ENCODE measurements at regions of chr4 and their contacts with region 1.

Region 1: DNA sequence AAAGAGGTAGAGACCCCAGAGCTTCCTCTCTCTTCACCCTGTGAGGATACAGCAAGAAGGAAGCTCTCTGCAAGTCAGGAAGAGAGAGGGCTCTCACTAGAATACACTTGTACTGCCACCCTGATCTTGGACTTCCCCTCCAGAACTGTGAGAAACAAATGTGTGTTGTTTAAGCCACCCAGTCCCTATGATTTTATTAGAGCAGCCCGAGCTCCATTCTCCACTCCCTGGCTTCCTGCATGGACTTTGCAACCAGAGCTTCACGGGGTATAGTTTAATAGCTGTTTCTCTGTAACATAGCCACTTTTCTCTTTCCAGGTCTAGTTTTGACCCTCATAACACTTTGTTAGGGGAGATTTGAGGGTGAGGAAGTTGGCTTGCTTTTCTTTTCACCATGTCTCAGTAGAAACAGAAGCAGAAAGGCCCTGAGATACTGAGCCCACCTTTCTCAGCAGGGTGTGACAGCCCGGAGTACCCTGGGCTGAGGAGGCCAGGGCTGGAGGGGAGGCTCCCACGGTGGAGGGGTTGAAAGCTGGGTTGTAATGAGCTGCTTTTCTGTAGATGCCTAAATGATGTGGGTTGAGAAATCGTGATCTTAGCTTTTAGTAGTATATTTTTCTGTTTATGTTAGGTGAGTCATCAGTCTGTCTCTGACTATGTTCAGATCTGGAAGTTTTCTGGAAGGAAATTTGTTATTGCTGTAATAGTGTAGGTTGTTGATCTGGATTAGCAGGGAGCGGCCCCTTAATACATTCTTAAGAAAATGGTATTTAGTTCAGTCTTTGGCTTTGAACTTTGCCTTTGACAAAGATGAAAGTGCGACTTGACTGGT is 118.6 kb downstream of the PTTG2 start:
- DNase-seq: no peak
- ATAC-seq: no peak
- H3K4me3 ChIP-seq: peak overlapping the region in 1 of 12 donors; percentile 5
- H3K27ac ChIP-seq: peak overlapping the region in 11 of 12 donors; percentile 33 to 92 (median 64)
- H3K4me1 ChIP-seq: peaks cover 2 to 95% (median 55%) of the 10 kb centered on the region in 12 donors
- H3K27me3 ChIP-seq: no peaks in the 10 kb centered on the region
- CTCF ChIP-seq: no peak
- POLR2A ChIP-seq: no peak

Region 2: DNA sequence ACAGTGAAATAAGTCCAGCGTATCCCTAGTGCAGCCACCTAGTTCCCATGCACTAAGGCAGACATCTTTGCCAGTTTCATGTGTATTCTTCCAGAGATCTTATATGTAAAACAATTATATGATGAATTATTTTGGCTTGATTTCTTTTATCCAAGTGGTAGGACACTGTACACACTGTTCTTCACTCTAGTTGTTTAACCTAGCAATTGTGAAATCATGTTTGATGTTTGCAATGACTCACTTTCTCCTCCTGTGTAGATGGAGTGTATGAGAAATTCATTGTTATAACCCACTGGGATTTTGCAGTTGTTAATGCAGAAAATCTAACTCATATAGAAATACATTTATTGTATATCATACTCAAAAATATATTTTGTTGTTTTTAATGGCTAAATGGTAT is 205.4 kb before region 1 on chr4:
- intact Hi-C with region 1: no loop called
- DNase-seq: no peak
- ATAC-seq: peak in 2 of 4 donors; percentile 70 to 89
- H3K4me3 ChIP-seq: no peak overlapping the region
- H3K27ac ChIP-seq: peak overlapping the region in 1 of 12 donors; percentile 82
- H3K4me1 ChIP-seq: peaks cover 0 to 17% (median 4%) of the 10 kb centered on the region in 12 donors
- H3K27me3 ChIP-seq: no peaks in the 10 kb centered on the region
- CTCF ChIP-seq: no peak
- POLR2A ChIP-seq: no peak

Region 3: GRCh38 chr4:38114386-38115150 is 35.8 kb after region 1 on chr4:
- intact Hi-C with region 1: loop called in 3 of 10 experiments (anchors 5 kb)
- DNase-seq: peak in 1 of 5 donors; percentile 35
- ATAC-seq: peak; percentile 10 to 53 (median 22)
- H3K4me3 ChIP-seq: no peak overlapping the region
- H3K27ac ChIP-seq: peak overlapping the region in 10 of 12 donors; percentile 31 to 59 (median 40)
- H3K4me1 ChIP-seq: peaks cover 0 to 67% (median 32%) of the 10 kb centered on the region in 12 donors
- H3K27me3 ChIP-seq: no peaks in the 10 kb centered on the region
- CTCF ChIP-seq: no peak
- POLR2A ChIP-seq: no peak

Region 4: DNA sequence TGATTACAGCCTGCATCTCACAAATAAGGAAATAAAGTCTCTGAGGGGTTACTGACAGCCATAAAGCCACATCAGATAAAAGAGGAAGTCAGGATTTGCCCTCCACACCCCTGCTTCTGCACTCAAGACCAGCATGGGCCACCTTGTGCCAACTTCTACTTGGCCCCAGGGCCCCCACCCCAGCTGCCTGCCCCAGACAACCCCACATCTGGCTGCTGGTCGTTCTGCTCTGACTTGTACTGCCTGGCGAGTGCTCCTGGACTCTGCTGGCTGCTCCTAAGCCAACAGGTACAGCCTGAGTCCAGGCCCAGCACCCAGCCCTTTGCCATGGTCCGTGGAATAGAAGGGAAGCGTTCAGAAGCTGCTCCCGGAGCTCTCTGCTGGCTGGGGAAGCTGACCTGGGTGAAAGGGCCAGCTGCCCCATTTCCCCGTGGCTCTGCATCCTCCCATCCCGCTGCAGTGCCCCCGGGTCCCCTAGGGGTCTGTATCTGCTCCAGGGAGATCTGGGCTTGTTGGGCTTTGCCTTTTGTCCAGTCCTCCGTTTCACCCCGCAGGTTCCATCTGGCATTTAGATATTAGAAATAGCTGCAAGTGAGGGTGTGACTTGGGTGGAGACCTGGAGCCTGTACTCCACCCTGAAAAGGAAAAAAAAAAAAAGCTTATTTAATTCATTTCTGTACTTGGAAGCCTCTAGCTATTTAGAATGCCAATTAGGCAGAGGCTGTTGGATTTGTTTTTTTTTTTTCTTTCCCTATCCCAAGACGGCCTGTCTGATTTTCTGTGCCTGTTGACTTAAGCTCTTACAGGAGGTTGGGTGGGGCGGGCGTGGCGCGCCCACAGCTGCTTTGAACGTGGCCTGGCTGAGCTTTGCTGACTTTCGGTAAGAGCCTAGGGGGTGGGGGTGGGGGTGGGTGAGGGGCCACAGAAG is 76.1 kb after region 1 on chr4:
- intact Hi-C with region 1: loop called in 4 of 10 experiments (anchors 5 to 10 kb)
- DNase-seq: peak; percentile 42 to 73 (median 69)
- ATAC-seq: peak; percentile 53 to 82 (median 77)
- H3K4me3 ChIP-seq: peak overlapping the region in 3 of 12 donors; percentile 3 to 18 (median 11)
- H3K27ac ChIP-seq: peak overlapping the region; percentile 59 to 79 (median 69)
- H3K4me1 ChIP-seq: peaks cover 0 to 48% (median 33%) of the 10 kb centered on the region in 12 donors
- H3K27me3 ChIP-seq: no peaks in the 10 kb centered on the region
- CTCF ChIP-seq: no peak
- POLR2A ChIP-seq: no peak

Region 5: GRCh38 chr4:38166082-38166481 is 87.3 kb after region 1 on chr4:
- intact Hi-C with region 1: loop called in 2 of 10 experiments (anchors 5 kb)
- DNase-seq: no peak
- ATAC-seq: peak in 1 of 4 donors; percentile 32
- H3K4me3 ChIP-seq: no peak overlapping the region
- H3K27ac ChIP-seq: peak overlapping the region in 2 of 12 donors; percentile 12 to 84
- H3K4me1 ChIP-seq: peaks cover 0 to 52% (median 13%) of the 10 kb centered on the region in 12 donors
- H3K27me3 ChIP-seq: no peaks in the 10 kb centered on the region
- CTCF ChIP-seq: no peak
- POLR2A ChIP-seq: no peak

Region 6: GRCh38 chr4:38867478-38868058 is 788.8 kb after region 1 on chr4 and contains the start of gene FAM114A1:
- intact Hi-C with region 1: loop called in 1 of 10 experiments (anchors 10 kb)
- DNase-seq: peak; percentile 87 to 92 (median 88)
- ATAC-seq: peak; percentile 84 to 98 (median 95)
- H3K4me3 ChIP-seq: peak within 1 kb of the TSS; percentile 67 to 93 (median 88)
- H3K27ac ChIP-seq: peak within 1 kb of the TSS; percentile 75 to 96 (median 89)
- H3K4me1 ChIP-seq: peaks cover 0 to 48% (median 16%) of the 10 kb centered on the region in 12 donors
- H3K27me3 ChIP-seq: no peaks in the 10 kb centered on the region
- CTCF ChIP-seq: peak in 2 of 12 donors; percentile 8 to 13
- POLR2A ChIP-seq: no peak
- total RNA-seq, gene FAM114A1: 11.4 to 41.5 (median 24.2) TPM